ENCODE measurements at regions of chr5 and their contacts with region 1.

Region 1: DNA sequence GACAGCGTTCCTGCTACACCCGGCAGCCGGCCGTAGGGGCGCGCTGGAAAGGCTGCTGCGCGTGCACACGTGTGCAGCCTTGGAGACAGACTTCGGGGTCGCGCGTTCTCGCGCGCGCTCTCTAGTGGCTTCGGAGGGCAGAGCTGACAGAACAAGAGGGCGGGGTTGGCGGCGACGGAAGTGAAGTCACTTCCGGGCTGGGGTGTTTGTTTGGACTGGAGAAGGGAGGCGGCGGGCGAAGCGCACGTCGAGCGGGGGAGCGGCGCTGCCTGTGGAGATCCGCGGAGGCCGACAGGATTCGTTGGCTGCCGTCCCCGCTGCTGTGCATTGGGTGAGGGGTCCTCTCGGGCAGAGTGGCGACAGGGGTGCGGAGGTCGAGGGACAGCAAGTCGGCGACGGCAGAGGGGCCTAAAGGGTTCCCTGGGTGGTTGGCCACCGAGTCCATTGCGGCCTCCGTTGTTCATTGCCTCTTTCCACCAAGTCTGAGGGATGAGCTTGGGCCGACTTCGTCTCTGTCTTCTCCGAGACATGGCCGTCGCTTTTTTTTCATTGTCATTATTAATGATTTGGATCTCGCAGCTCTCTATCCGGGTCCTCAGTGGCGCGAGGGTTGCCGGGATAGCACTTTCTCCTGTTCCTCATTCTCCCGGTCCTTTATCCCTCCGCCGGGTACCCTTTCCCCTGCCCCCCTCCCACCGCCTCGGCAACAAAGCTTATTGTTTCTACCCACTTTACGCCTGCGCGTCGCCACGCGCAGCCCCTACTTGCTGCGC is at the start of gene PAIP2:
- DNase-seq: peak; percentile 88 to 99
- H3K4me3 ChIP-seq: peak within 1 kb of the TSS; percentile 71 to 97
- H3K27ac ChIP-seq: peak within 1 kb of the TSS; percentile 90 to 99
- H3K4me1 ChIP-seq: peaks cover 5 to 19% of the 10 kb centered on the region in 2 donors
- H3K27me3 ChIP-seq: no peaks in the 10 kb centered on the region
- CTCF ChIP-seq: peak; percentile 78 to 85 (median 84)
- total RNA-seq, gene PAIP2: 27.6 TPM

Region 2: DNA sequence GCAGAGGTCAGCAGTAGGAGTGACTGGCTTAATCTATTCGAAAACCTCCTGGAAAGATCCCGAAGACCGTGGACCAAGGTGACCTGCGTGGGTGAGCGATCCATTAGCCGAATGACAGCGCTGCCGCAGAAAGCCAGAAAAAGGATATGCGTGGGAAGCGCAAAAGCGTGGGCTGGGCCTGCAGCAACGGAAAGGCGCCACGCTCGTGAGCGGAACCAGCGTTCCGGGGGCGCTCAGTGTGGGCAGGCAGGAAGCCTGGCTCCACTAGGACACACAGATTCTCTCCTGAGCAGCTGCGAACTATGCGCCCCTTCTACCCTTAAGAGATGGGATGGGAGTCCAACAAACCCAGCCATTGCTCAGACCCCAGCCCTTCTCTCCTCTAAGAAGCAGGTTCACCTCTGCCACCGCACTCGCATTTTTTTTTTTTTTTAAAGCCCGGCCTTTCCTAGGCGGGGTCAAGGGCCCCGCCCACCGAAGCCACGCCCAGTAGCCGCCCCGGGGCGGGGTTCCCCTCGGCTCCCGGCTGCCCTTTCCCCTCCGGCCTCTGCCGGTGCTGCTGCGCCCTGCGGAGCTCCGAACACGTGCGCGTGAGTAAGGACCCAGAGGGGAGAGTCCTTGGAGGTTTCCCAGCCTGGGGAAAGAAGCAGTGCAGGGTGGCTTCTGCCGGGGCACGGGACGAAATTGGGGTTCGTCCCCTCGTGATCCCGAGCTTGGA is 68.1 kb before region 1 on chr5:
- intact Hi-C with region 1: loop called (anchors 5 kb)
- DNase-seq: peak; percentile 55 to 93
- H3K4me3 ChIP-seq: peak overlapping the region; percentile 44 to 71
- H3K27ac ChIP-seq: peak overlapping the region; percentile 47 to 48
- H3K4me1 ChIP-seq: peaks cover 0 to 21% of the 10 kb centered on the region in 2 donors
- H3K27me3 ChIP-seq: no peaks in the 10 kb centered on the region
- CTCF ChIP-seq: peak in 2 of 3 experiments; percentile 18 to 31

Region 3: GRCh38 chr5:139482050-139482889 is 140.4 kb after region 1 on chr5 and contains the start of gene STING1:
- intact Hi-C with region 1: no loop called
- DNase-seq: peak; percentile 53 to 93
- H3K4me3 ChIP-seq: peak within 1 kb of the TSS; percentile 64 to 74
- H3K27ac ChIP-seq: peak within 1 kb of the TSS; percentile 96 to 98
- H3K4me1 ChIP-seq: peaks cover 4 to 27% of the 10 kb centered on the region in 2 donors
- H3K27me3 ChIP-seq: no peaks in the 10 kb centered on the region
- CTCF ChIP-seq: no peak
- total RNA-seq, gene STING1: 179 TPM

Measured in ascending aorta (tissue), 2 donors.